ENCODE measurements at regions of chr9 and their contacts with region 1.

Region 1: GRCh38 chr9:129177791-129178559 is at the start of gene IER5L:
- DNase-seq: peak; percentile 89 to 97 (median 94)
- ATAC-seq: peak; percentile 84 to 88
- H3K4me3 Mint-ChIP-seq: peak within 1 kb of the TSS; percentile 88 to 96 (median 93)
- H3K27ac Mint-ChIP-seq: peak within 1 kb of the TSS in 9 of 10 donors; percentile 51 to 87 (median 82)
- H3K4me1 Mint-ChIP-seq: peaks cover 3 to 16% (median 8%) of the 10 kb centered on the region in 4 donors
- H3K27me3 Mint-ChIP-seq: peaks cover 0 to 3% (median 0%) of the 10 kb centered on the region in 5 donors
- polyA plus RNA-seq, gene IER5L: 0.05 to 0.49 TPM in 2 of 3 donors, not detected in the other

Region 2: DNA sequence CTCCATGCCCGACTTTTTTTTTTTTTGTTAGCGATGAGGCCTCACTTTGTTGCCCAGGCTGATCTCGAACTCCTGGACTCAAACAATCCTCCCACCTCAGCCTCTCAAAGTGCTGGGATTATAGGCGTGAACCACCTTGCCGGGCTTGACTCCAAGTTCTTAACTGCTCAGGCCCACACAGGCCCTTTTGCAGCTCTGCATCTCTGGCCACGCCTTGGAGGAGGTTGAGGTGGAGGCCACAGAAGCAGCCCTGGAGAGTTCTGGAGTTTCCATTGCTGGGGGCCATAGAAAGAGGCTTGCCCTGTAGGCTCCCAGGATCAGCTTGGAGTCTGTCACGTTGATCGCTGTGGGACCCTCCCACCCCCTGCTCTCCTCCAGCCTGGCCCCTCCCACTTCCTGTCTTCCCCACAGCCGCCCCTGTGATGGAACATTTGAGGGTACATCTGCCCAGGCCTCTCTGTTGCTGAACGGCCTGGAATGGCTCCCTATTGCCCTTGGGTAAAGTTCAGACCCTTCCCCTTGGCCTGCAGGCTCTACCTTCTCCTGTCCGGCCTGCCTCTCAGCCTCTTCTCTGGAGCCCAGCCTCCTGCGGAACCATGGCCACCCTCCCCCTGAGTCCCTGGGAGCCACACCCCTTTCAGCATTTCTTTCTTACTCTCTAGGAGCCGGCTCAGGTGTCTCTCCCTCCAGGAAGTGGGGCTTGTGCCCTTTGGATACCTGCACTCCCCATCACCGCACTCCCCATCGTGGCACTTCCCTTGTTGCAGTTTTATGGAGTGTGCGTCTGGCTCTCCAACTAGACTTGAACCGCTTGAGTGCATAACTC is 30.4 kb after region 1 on chr9:
- POLR2A ChIA-PET with region 1: interaction called, 28 read pairs
- DNase-seq: peak; percentile 27 to 82 (median 50)
- ATAC-seq: peak; percentile 63 to 80
- H3K4me3 Mint-ChIP-seq: peak overlapping the region; percentile 76 to 95 (median 88)
- H3K27ac Mint-ChIP-seq: peak overlapping the region; percentile 83 to 98 (median 95)
- H3K4me1 Mint-ChIP-seq: peaks cover 24 to 58% (median 41%) of the 10 kb centered on the region in 4 donors
- H3K27me3 Mint-ChIP-seq: no peaks in the 10 kb centered on the region

Region 3: GRCh38 chr9:129237195-129237611 is 59.2 kb after region 1 on chr9:
- POLR2A ChIA-PET with region 1: interaction called, 92 read pairs
- DNase-seq: peak in 7 of 10 donors; percentile 31 to 70 (median 45)
- ATAC-seq: peak; percentile 39 to 65
- H3K4me3 Mint-ChIP-seq: peak overlapping the region; percentile 87 to 97 (median 92)
- H3K27ac Mint-ChIP-seq: peak overlapping the region; percentile 92 to 99 (median 96)
- H3K4me1 Mint-ChIP-seq: peaks cover 41 to 83% (median 70%) of the 10 kb centered on the region in 4 donors
- H3K27me3 Mint-ChIP-seq: peaks cover 0 to 1% (median 0%) of the 10 kb centered on the region in 5 donors

Region 4: GRCh38 chr9:129333953-129334724 is 156.2 kb after region 1 on chr9:
- POLR2A ChIA-PET with region 1: interaction called, 19 read pairs
- DNase-seq: peak in 7 of 10 donors; percentile 23 to 68 (median 28)
- ATAC-seq: peak; percentile 60 to 66
- H3K4me3 Mint-ChIP-seq: peak overlapping the region; percentile 26 to 97 (median 81)
- H3K27ac Mint-ChIP-seq: peak overlapping the region; percentile 12 to 94 (median 86)
- H3K4me1 Mint-ChIP-seq: peaks cover 22 to 41% (median 32%) of the 10 kb centered on the region in 4 donors
- H3K27me3 Mint-ChIP-seq: no peaks in the 10 kb centered on the region

Region 5: GRCh38 chr9:129495534-129496325 is 317.8 kb after region 1 on chr9:
- POLR2A ChIA-PET with region 1: interaction called, 13 read pairs
- DNase-seq: peak; percentile 70 to 88 (median 76)
- ATAC-seq: peak; percentile 86 to 91
- H3K4me3 Mint-ChIP-seq: peak overlapping the region; percentile 67 to 89 (median 82)
- H3K27ac Mint-ChIP-seq: peak overlapping the region in 8 of 10 donors; percentile 31 to 86 (median 72)
- H3K4me1 Mint-ChIP-seq: peaks cover 14 to 35% (median 29%) of the 10 kb centered on the region in 4 donors
- H3K27me3 Mint-ChIP-seq: peaks cover 0 to 2% (median 0%) of the 10 kb centered on the region in 5 donors

Region 6: GRCh38 chr9:129626079-129626624 is 448.2 kb after region 1 on chr9 and contains the start of gene NTMT1:
- POLR2A ChIA-PET with region 1: interaction called, 10 read pairs
- DNase-seq: peak; percentile 88 to 97 (median 91)
- ATAC-seq: peak; percentile 73 to 78
- H3K4me3 Mint-ChIP-seq: peak within 1 kb of the TSS; percentile 82 to 97 (median 90)
- H3K27ac Mint-ChIP-seq: peak within 1 kb of the TSS; percentile 85 to 98 (median 96)
- H3K4me1 Mint-ChIP-seq: peaks cover 29 to 64% (median 60%) of the 10 kb centered on the region in 4 donors
- H3K27me3 Mint-ChIP-seq: peaks cover 2 to 20% (median 6%) of the 10 kb centered on the region in 5 donors
- polyA plus RNA-seq, gene NTMT1: 40.8 to 57.8 (median 45.2) TPM

Measured in naive thymus-derived CD8-positive, alpha-beta T cell (primary cell).